T-cell (primary cell): ENCODE measurements at regions of chr5 and their contacts with region 1.

Region 1: GRCh38 chr5:148730943-148731861 is 76.9 kb upstream of the HTR4 start:
- DNase-seq: peak; percentile 2 to 84 (median 59)
- ATAC-seq: peak; percentile 86 to 96 (median 90)
- H3K4me3 ChIP-seq: peak overlapping the region in 1 of 2 donors; percentile 8
- H3K4me3 Mint-ChIP-seq: peak overlapping the region; percentile 33 to 78 (median 59)
- H3K27ac ChIP-seq: no peak overlapping the region
- H3K27ac Mint-ChIP-seq: peak overlapping the region; percentile 70 to 77
- H3K4me1 ChIP-seq: no peaks in the 10 kb centered on the region
- H3K4me1 Mint-ChIP-seq: peaks cover 0 to 11% (median 5%) of the 10 kb centered on the region in 3 donors
- H3K27me3 ChIP-seq: no peaks in the 10 kb centered on the region
- H3K27me3 Mint-ChIP-seq: peaks cover 3 to 4% of the 10 kb centered on the region in 2 donors

Region 2: DNA sequence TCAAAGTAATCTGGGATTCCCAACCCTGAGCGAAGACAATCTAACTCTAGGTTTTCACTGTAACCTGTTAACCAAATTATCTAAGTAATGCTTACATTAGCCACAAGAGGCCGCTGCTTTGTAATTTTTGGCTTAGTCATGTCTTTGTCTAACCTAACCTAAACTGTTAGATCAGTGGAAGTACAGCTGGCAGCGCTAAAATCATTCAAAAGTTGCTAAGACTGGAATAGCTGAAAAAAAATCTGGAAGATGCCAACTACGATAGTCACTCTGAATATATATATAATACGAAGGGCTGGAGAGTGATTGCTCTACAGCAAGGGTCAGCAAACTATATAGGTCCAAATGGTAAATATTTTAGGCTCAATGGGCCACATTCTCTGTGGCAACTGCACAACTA is 287.2 kb before region 1 on chr5:
- CTCF ChIA-PET with region 1: interaction called, 15 to 90 read pairs
- POLR2A ChIA-PET with region 1: no interaction called
- DNase-seq: peak in 26 of 35 experiments; percentile 2 to 70 (median 23)
- ATAC-seq: peak; percentile 62 to 71 (median 70)
- H3K4me3 ChIP-seq: no peak overlapping the region
- H3K4me3 Mint-ChIP-seq: no peak overlapping the region
- H3K27ac ChIP-seq: no peak overlapping the region
- H3K27ac Mint-ChIP-seq: peak overlapping the region; percentile 2 to 55
- H3K4me1 ChIP-seq: no peaks in the 10 kb centered on the region
- H3K4me1 Mint-ChIP-seq: peaks cover 0 to 5% (median 0%) of the 10 kb centered on the region in 3 donors
- H3K27me3 ChIP-seq: no peaks in the 10 kb centered on the region
- H3K27me3 Mint-ChIP-seq: no peaks in the 10 kb centered on the region

Region 3: GRCh38 chr5:148998174-148998797 is 267.1 kb after region 1 on chr5:
- CTCF ChIA-PET with region 1: interaction called, 10 to 17 read pairs
- POLR2A ChIA-PET with region 1: no interaction called
- DNase-seq: peak in 13 of 35 experiments; percentile 2 to 71 (median 20)
- ATAC-seq: peak in 1 of 4 experiments; percentile 37
- H3K4me3 ChIP-seq: no peak overlapping the region
- H3K4me3 Mint-ChIP-seq: no peak overlapping the region
- H3K27ac ChIP-seq: no peak overlapping the region
- H3K27ac Mint-ChIP-seq: no peak overlapping the region
- H3K4me1 ChIP-seq: no peaks in the 10 kb centered on the region
- H3K4me1 Mint-ChIP-seq: no peaks in the 10 kb centered on the region
- H3K27me3 ChIP-seq: peaks cover 0 to 2% of the 10 kb centered on the region in 2 experiments
- H3K27me3 Mint-ChIP-seq: peaks cover 16 to 44% of the 10 kb centered on the region in 2 donors

Region 4: DNA sequence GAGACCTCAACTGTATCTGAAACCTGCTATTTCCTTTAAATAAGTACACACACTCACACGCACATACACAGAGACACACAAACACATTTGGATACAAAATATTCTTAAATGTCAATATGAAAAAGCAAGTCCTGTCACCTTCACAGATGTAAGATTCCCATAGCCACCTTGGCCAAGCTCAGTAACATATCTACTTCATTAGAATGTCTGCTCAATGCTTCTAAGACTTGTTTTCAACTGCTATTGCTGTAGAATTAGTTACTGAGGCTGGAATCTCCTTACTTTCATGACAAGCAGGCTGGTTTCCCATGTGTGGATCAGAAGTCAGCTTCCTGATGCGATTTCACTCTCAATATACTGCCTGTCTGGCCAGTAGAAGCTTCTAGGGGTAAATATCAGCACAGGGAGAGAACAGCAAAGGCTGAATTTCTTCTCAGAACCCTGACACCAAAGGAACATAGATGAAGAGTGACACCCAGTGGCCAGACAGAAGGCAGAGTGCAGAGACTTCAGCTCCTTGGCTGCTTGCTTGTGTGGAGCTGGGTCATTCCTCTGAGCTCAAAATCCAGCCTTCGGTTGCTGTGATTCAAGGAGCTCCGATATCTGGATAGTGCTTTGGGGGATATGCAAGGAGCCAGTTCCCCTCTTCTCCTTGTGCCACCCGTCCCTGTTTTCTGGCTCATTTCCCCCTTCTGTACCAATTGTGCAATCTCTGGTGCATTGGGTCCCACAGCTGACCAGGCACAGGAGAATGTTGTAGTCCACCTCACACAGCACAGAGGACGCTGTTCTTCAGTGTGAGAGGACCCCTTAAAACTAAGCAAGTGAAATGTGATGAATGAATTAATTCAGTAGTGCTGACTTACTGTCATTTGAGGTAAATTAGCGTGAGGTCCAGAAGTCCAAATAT is 383.5 kb after region 1 on chr5:
- CTCF ChIA-PET with region 1: interaction called, 8 to 26 read pairs
- POLR2A ChIA-PET with region 1: no interaction called
- DNase-seq: peak in 25 of 35 experiments; percentile 5 to 45 (median 20)
- ATAC-seq: peak; percentile 60 to 73 (median 62)
- H3K4me3 ChIP-seq: no peak overlapping the region
- H3K4me3 Mint-ChIP-seq: no peak overlapping the region
- H3K27ac ChIP-seq: no peak overlapping the region
- H3K27ac Mint-ChIP-seq: no peak overlapping the region
- H3K4me1 ChIP-seq: no peaks in the 10 kb centered on the region
- H3K4me1 Mint-ChIP-seq: no peaks in the 10 kb centered on the region
- H3K27me3 ChIP-seq: peaks cover 0 to 3% of the 10 kb centered on the region in 2 experiments
- H3K27me3 Mint-ChIP-seq: peaks cover 5 to 26% of the 10 kb centered on the region in 2 donors